Heart right ventricle (tissue), 16 donors: ENCODE measurements at regions of chr15 and their contacts with region 1.

Region 1: DNA sequence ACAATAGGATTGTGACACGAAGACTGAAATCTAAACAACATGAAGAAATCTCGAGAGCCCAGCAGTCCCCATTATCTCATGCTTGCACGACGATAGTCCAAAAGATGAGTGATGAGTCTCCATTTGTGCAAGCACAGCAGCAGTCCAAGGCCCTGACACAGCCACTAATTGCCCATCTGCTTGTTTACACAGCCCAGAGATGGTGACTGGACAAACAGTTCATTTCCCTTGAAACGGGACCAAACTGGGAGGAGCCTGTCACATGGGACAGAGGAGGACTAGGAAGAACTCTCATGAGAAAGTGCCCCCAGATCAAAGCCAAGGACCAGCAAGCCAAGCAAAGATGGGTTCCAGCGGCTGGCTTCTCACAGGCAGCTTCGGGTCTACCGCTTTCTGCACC is 121.0 kb downstream of the GREM1 start:
- DNase-seq: no peak
- ATAC-seq: peak in 1 of 8 donors; percentile 41
- H3K4me3 ChIP-seq: no peak overlapping the region
- H3K27ac ChIP-seq: no peak overlapping the region
- H3K4me1 ChIP-seq: no peaks in the 10 kb centered on the region
- H3K27me3 ChIP-seq: peaks cover 0 to 16% (median 0%) of the 10 kb centered on the region in 7 donors
- CTCF ChIP-seq: no peak

Region 2: DNA sequence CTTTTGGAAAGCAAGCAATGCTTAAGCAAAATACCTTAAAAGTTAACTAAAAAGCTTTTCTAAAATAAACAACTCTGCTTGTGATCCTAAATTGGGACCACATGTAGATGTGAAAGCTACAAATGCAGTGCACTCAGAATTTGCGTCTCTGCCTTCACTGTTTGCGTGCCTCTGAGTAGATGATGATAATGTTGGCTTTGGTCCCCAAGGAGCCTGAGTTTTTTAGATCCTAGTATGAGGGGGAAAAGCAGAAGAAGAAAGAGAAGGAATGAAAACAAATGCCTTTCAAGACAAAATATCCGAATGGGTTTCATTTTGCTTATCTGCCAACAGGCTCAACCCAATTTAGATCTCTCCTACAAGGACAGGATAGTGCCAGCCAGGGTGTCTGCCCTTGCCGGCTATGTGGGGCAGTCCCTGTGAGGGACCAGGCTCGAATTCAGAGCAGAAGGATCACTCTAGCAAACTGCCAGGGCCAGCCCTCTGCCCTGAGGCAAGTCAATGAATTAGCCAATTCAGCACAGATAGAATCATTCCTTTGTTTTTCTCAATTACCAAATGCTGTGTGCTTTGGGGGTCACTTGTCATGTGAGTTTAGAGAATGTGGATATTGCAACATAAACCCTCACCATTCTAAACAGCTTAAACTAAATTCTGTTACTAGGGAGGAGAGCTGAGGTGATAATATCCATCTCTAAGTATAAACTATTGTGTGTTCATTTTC is 168.8 kb before region 1 on chr15:
- intact Hi-C with region 1: loop called in 1 of 10 experiments (anchors 10 kb)
- DNase-seq: peak in 1 of 2 donors; percentile 13
- ATAC-seq: peak in 5 of 8 donors; percentile 33 to 71 (median 53)
- H3K4me3 ChIP-seq: no peak overlapping the region
- H3K27ac ChIP-seq: no peak overlapping the region
- H3K4me1 ChIP-seq: peaks cover 0 to 5% (median 0%) of the 10 kb centered on the region in 9 donors
- H3K27me3 ChIP-seq: no peaks in the 10 kb centered on the region
- CTCF ChIP-seq: no peak